RWPE1 (cell line): ENCODE measurements at regions of chr5 and their contacts with region 1.

Region 1: GRCh38 chr5:73540192-73540591 is 25.2 kb downstream of the ANKRA2 start:
- DNase-seq: peak; percentile 78
- H3K27ac ChIP-seq: peak overlapping the region; percentile 45; the same call in 1 of the 2 replicates
- CTCF ChIP-seq: no peak

Region 2: GRCh38 chr5:73519531-73520283 is 20.5 kb before region 1 on chr5:
- CTCF ChIA-PET with region 1: interaction called, 12 read pairs
- POLR2A ChIA-PET with region 1: no interaction called
- DNase-seq: peak; percentile 93
- H3K27ac ChIP-seq: no peak overlapping the region
- CTCF ChIP-seq: peak; percentile 94